ENCODE measurements at regions of chr7 and their contacts with region 1.

Region 1: GRCh38 chr7:6516387-6516983 is 34.8 kb downstream of the GRID2IP start:
- DNase-seq: peak; percentile 44 to 74 (median 54)
- H3K4me3 ChIP-seq: peak overlapping the region; percentile 51
- H3K4me3 Mint-ChIP-seq: peak overlapping the region; percentile 25 to 85 (median 78)
- H3K27ac ChIP-seq: no peak overlapping the region
- H3K27ac Mint-ChIP-seq: peak overlapping the region in 3 of 8 donors; percentile 38 to 55 (median 43)
- H3K4me1 ChIP-seq: no peaks in the 10 kb centered on the region
- H3K4me1 Mint-ChIP-seq: peaks cover 5 to 11% (median 9%) of the 10 kb centered on the region in 3 donors
- H3K27me3 ChIP-seq: no peaks in the 10 kb centered on the region
- H3K27me3 Mint-ChIP-seq: peaks cover 0 to 10% of the 10 kb centered on the region in 2 donors

Region 2: DNA sequence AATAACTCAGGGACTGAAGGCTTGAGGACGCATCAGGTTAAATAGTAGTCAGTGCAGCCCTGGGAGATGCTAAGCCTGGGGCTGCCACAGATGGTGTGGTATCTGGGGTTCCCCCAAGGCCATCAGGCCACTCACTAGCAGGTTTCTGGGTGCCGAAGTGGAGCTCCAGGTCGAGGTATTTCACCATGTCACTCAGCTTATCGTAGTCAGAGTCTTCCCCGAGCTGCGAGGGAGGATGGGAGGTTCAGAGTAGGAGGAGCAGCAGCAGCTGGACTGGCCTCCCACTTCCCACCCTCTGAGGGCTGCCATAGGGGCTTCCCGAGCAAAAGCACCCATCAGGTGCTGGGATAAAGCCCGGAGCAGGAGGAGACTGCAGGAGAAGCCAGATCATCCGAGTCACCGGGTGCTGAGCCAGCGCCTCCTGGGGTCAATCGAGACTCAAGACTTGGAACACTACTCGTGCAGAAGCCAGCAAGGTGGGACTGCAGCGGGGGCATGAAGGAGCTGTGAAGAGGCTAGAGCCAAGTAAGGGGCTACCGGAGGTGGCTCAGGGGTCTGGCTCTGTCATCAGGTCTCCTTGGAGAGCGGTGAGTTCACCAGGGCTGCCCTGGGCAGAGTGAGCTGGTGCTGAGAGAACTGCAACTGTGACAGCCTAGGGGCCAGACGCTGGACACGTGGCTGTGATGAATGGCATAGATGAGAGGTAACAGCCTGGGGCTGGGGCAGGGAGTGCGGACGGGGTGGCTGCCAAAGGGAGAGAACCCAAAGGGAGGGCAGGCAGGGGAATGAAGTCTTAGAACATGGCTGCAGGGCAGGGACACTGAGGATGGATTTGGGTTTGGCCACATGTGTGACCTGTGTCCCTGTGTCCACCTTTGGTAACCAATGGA is 10.6 kb before region 1 on chr7:
- CTCF ChIA-PET with region 1: interaction called, 10 read pairs
- POLR2A ChIA-PET with region 1: no interaction called
- DNase-seq: no peak
- H3K4me3 ChIP-seq: no peak overlapping the region
- H3K4me3 Mint-ChIP-seq: peak overlapping the region in 3 of 7 donors; percentile 21 to 58 (median 47)
- H3K27ac ChIP-seq: no peak overlapping the region
- H3K27ac Mint-ChIP-seq: peak overlapping the region in 1 of 8 donors; percentile 13
- H3K4me1 ChIP-seq: peaks cover 7% of the 10 kb centered on the region
- H3K4me1 Mint-ChIP-seq: peaks cover 0 to 10% (median 4%) of the 10 kb centered on the region in 3 donors
- H3K27me3 ChIP-seq: no peaks in the 10 kb centered on the region
- H3K27me3 Mint-ChIP-seq: peaks cover 0 to 3% of the 10 kb centered on the region in 2 donors

Region 3: GRCh38 chr7:6691609-6692106 is 175.2 kb after region 1 on chr7:
- CTCF ChIA-PET with region 1: no interaction called
- POLR2A ChIA-PET with region 1: no interaction called
- DNase-seq: no peak
- H3K4me3 ChIP-seq: no peak overlapping the region
- H3K4me3 Mint-ChIP-seq: no peak overlapping the region
- H3K27ac ChIP-seq: no peak overlapping the region
- H3K27ac Mint-ChIP-seq: no peak overlapping the region
- H3K4me1 ChIP-seq: no peaks in the 10 kb centered on the region
- H3K4me1 Mint-ChIP-seq: no peaks in the 10 kb centered on the region
- H3K27me3 ChIP-seq: no peaks in the 10 kb centered on the region
- H3K27me3 Mint-ChIP-seq: no peaks in the 10 kb centered on the region